ENCODE measurements at regions of chr3 and their contacts with region 1.

Region 1: DNA sequence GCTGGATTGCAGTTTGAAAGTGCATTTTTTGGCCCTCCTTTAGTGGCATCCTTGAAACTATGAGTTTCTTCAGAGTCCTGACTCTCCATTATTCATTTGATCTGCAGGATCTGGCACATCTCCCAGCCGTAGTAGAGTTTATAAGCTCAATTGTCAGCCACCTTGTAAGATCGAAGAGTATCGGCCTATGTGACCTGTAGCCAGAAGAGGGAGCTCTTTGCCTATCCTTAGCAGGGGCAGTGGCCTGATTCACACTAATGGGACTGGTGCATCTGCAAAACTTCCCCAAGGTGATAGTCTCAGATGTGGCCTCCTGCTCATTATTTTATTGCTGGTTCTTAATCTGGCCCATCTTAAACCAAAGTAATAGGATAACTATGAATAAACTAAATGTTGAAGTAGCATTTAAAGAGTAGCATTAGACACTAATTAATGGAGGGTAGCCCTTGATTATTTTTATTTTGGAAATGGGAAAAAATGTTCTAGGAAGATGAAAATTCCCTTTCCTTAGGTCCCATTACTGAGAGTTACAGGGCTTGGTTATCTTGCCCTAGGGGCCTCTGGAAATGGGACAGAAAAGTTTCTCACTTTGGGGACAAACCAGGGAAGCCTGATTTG is 21.2 kb downstream of the GCSAM start:
- DNase-seq: peak; percentile 22 to 85 (median 51)
- ATAC-seq: peak; percentile 88 to 94 (median 92)
- H3K4me3 ChIP-seq: no peak overlapping the region
- H3K4me3 Mint-ChIP-seq: no peak overlapping the region
- H3K27ac ChIP-seq: no peak overlapping the region
- H3K27ac Mint-ChIP-seq: no peak overlapping the region
- H3K4me1 ChIP-seq: peaks cover 4 to 5% of the 10 kb centered on the region in 2 experiments
- H3K4me1 Mint-ChIP-seq: peaks cover 0 to 15% (median 6%) of the 10 kb centered on the region in 3 donors
- H3K27me3 ChIP-seq: no peaks in the 10 kb centered on the region
- H3K27me3 Mint-ChIP-seq: no peaks in the 10 kb centered on the region

Region 2: DNA sequence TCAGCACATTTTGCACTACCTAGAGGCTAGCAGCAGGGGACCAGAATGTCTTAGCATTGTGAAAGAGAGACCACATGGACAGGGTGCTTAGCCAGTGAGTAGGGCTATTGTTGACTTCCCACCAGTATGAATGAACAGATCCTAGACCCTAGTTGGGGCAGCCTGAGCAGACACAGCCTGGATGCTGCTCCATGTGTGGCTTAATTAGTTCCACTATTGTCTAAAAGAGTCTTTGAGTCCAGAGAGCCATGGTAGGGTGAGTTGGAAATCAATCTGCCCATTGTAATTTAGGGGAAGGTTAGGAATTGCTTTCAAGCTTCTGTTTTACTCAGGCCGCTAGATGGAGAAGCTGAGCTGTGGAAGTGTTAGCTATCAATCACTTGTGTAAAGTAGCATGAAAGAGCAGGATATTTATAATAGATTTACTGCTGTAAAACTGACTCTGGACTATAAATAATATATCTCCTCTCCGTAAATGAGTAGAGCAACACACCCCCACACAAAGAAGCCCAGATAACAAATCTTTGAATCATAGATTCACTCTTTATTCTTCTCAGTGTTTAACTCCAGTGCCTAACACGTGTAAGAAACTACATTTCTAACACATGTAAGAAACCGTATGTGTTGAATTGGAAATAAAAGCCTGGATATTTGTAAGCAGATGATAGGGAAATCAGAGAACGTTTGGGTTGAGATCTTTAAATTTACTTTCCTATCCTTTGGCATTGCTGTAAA is 25.2 kb after region 1 on chr3:
- CTCF ChIA-PET with region 1: interaction called, 31 to 50 read pairs
- POLR2A ChIA-PET with region 1: no interaction called
- DNase-seq: peak in 27 of 35 experiments; percentile 12 to 68 (median 29)
- ATAC-seq: peak in 1 of 4 experiments; percentile 38
- H3K4me3 ChIP-seq: no peak overlapping the region
- H3K4me3 Mint-ChIP-seq: no peak overlapping the region
- H3K27ac ChIP-seq: no peak overlapping the region
- H3K27ac Mint-ChIP-seq: peak overlapping the region; percentile 73 to 83
- H3K4me1 ChIP-seq: peaks cover 25 to 40% of the 10 kb centered on the region in 2 experiments
- H3K4me1 Mint-ChIP-seq: peaks cover 58 to 63% (median 61%) of the 10 kb centered on the region in 3 donors
- H3K27me3 ChIP-seq: no peaks in the 10 kb centered on the region
- H3K27me3 Mint-ChIP-seq: no peaks in the 10 kb centered on the region

Region 3: GRCh38 chr3:112303764-112304325 is 192.0 kb after region 1 on chr3:
- CTCF ChIA-PET with region 1: interaction called in 1 of 2 experiments, 10 read pairs
- POLR2A ChIA-PET with region 1: no interaction called
- DNase-seq: peak in 16 of 35 experiments; percentile 3 to 47 (median 19)
- ATAC-seq: peak; percentile 48 to 83 (median 70)
- H3K4me3 ChIP-seq: peak overlapping the region; percentile 47 to 67
- H3K4me3 Mint-ChIP-seq: no peak overlapping the region
- H3K27ac ChIP-seq: peak overlapping the region; percentile 27
- H3K27ac Mint-ChIP-seq: no peak overlapping the region
- H3K4me1 ChIP-seq: peaks cover 0 to 16% of the 10 kb centered on the region in 2 experiments
- H3K4me1 Mint-ChIP-seq: peaks cover 1% of the 10 kb centered on the region in 3 donors
- H3K27me3 ChIP-seq: no peaks in the 10 kb centered on the region
- H3K27me3 Mint-ChIP-seq: no peaks in the 10 kb centered on the region

Region 4: GRCh38 chr3:112519424-112520001 is 407.6 kb after region 1 on chr3:
- CTCF ChIA-PET with region 1: interaction called, 5 to 13 read pairs
- POLR2A ChIA-PET with region 1: no interaction called
- DNase-seq: peak in 22 of 35 experiments; percentile 1 to 76 (median 26)
- ATAC-seq: peak; percentile 73 to 85 (median 80)
- H3K4me3 ChIP-seq: no peak overlapping the region
- H3K4me3 Mint-ChIP-seq: no peak overlapping the region
- H3K27ac ChIP-seq: no peak overlapping the region
- H3K27ac Mint-ChIP-seq: no peak overlapping the region
- H3K4me1 ChIP-seq: peaks cover 0 to 7% of the 10 kb centered on the region in 2 experiments
- H3K4me1 Mint-ChIP-seq: peaks cover 19 to 23% (median 20%) of the 10 kb centered on the region in 3 donors
- H3K27me3 ChIP-seq: no peaks in the 10 kb centered on the region
- H3K27me3 Mint-ChIP-seq: no peaks in the 10 kb centered on the region

Measured in T-cell (primary cell).